IMR-90 (cell line): ENCODE measurements at regions of chr4 and their contacts with region 1.

Region 1: DNA sequence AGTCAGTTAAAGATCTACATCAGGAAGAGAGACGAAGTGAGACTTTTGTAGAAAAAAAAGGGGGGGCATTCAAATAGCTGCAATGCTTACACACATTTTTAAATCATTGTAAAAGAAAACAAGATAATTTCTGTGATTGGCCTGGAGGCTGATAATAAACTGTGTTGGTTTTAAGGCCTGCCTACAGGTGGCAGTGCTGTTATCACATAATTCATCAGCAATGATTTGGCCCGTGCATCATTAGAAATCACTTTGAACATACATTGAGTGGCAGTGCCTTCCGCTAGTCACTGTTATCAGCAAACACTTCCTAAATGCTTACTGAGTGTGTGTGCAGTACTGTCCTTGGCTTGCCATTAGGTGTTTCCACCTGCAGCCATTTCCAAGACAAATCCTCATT is 831.9 kb downstream of the TRIML1 start:
- DNase-seq: peak; percentile 28
- ATAC-seq: peak; percentile 70
- H3K4me3 ChIP-seq: no peak overlapping the region
- H3K27ac ChIP-seq: no peak overlapping the region
- H3K4me1 ChIP-seq: peaks cover 3% of the 10 kb centered on the region; the same call in 1 of the 2 replicates
- H3K27me3 ChIP-seq: no peaks in the 10 kb centered on the region
- CTCF ChIP-seq: peak; percentile 53
- POLR2A ChIP-seq: no peak
- RAD21 ChIP-seq: peak; percentile 54

Region 2: GRCh38 chr4:189069772-189070171 is 98.6 kb after region 1 on chr4:
- CTCF ChIA-PET with region 1: no interaction called
- POLR2A ChIA-PET with region 1: interaction called, 15 read pairs
- dilution Hi-C with region 1: no loop called
- in situ Hi-C with region 1: no loop called
- intact Hi-C with region 1: no loop called
- DNase-seq: peak; percentile 49
- ATAC-seq: no peak
- H3K4me3 ChIP-seq: no peak overlapping the region
- H3K27ac ChIP-seq: no peak overlapping the region
- H3K4me1 ChIP-seq: peaks cover 4% of the 10 kb centered on the region; the same call in 1 of the 2 replicates
- H3K27me3 ChIP-seq: no peaks in the 10 kb centered on the region
- CTCF ChIP-seq: no peak
- POLR2A ChIP-seq: no peak
- RAD21 ChIP-seq: no peak